Activated CD4-positive, alpha-beta memory T cell treated with anti-CD3 and anti-CD28 coated beads, Interleukin-2, amount 10 ng/mL, durations not matched to agents 7 days and 5 days (primary cell): ENCODE measurements at regions of chr19 and their contacts with region 1.

Region 1: GRCh38 chr19:4352701-4353121 is 9.3 kb downstream of the MPND start:
- DNase-seq: peak; percentile 53
- H3K4me3 Mint-ChIP-seq: no peak overlapping the region
- H3K27ac Mint-ChIP-seq: no peak overlapping the region
- H3K4me1 Mint-ChIP-seq: no peaks in the 10 kb centered on the region
- H3K27me3 Mint-ChIP-seq: no peaks in the 10 kb centered on the region

Region 2: GRCh38 chr19:4197625-4198466 is 154.9 kb before region 1 on chr19:
- CTCF ChIA-PET with region 1: no interaction called
- POLR2A ChIA-PET with region 1: no interaction called
- DNase-seq: no peak
- H3K4me3 Mint-ChIP-seq: no peak overlapping the region
- H3K27ac Mint-ChIP-seq: no peak overlapping the region
- H3K4me1 Mint-ChIP-seq: peaks cover 8% of the 10 kb centered on the region
- H3K27me3 Mint-ChIP-seq: peaks cover 29% of the 10 kb centered on the region

Region 3: GRCh38 chr19:4267101-4267900 is 85.4 kb before region 1 on chr19:
- CTCF ChIA-PET with region 1: interaction called, 69 read pairs
- POLR2A ChIA-PET with region 1: interaction called, 12 read pairs
- DNase-seq: peak; percentile 66
- H3K4me3 Mint-ChIP-seq: no peak overlapping the region
- H3K27ac Mint-ChIP-seq: no peak overlapping the region
- H3K4me1 Mint-ChIP-seq: peaks cover 18% of the 10 kb centered on the region
- H3K27me3 Mint-ChIP-seq: no peaks in the 10 kb centered on the region

Region 4: DNA sequence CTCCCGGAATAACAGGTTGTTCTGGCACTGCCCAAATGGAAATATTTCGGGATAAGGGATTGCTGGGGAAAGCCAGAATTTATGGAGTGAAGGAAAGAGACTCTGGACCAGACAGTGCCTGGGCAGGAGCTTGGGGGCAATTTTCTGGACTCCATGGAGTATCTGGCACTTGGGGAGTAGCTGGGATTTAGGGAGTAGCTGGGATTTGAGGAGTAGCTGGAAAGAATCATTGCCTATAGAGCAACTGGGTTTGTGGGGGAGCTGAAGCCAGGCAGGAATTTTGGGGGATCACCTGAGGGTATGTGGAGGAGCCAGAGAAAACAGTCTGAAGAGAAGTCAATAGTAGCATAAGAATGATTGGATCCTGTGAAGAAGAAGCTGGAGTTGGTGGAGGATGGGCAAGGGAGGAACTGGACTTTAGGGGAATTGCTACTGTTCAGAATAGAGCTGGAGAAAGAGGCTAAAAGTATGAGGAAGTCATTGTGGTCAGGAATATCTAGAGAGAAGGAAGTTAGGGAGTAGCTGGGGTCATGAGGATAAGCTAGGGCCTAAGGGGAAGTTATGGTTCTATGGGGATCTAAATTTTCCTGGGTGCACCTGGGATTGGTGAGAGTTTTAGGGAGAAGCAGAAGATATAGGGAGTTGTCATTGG is 33.5 kb before region 1 on chr19:
- CTCF ChIA-PET with region 1: interaction called, 10 read pairs
- POLR2A ChIA-PET with region 1: no interaction called
- DNase-seq: no peak
- H3K4me3 Mint-ChIP-seq: no peak overlapping the region
- H3K27ac Mint-ChIP-seq: no peak overlapping the region
- H3K4me1 Mint-ChIP-seq: no peaks in the 10 kb centered on the region
- H3K27me3 Mint-ChIP-seq: no peaks in the 10 kb centered on the region

Region 5: GRCh38 chr19:4362861-4363510 is 10.3 kb after region 1 on chr19:
- CTCF ChIA-PET with region 1: interaction called, 11 read pairs
- POLR2A ChIA-PET with region 1: interaction called, 6 read pairs
- DNase-seq: no peak
- H3K4me3 Mint-ChIP-seq: no peak overlapping the region
- H3K27ac Mint-ChIP-seq: no peak overlapping the region
- H3K4me1 Mint-ChIP-seq: peaks cover 10% of the 10 kb centered on the region
- H3K27me3 Mint-ChIP-seq: no peaks in the 10 kb centered on the region

Region 6: GRCh38 chr19:4393947-4394590 is 41.4 kb after region 1 on chr19:
- CTCF ChIA-PET with region 1: interaction called, 10 read pairs
- POLR2A ChIA-PET with region 1: no interaction called
- DNase-seq: no peak
- H3K4me3 Mint-ChIP-seq: no peak overlapping the region
- H3K27ac Mint-ChIP-seq: no peak overlapping the region
- H3K4me1 Mint-ChIP-seq: peaks cover 68% of the 10 kb centered on the region
- H3K27me3 Mint-ChIP-seq: no peaks in the 10 kb centered on the region